PC-9 (cell line): ENCODE measurements at regions of chr6 and their contacts with region 1.

Region 1: GRCh38 chr6:112010328-112010727 is 43.6 kb upstream of the CCN6 start:
- DNase-seq: no peak
- H3K4me3 ChIP-seq: no peak overlapping the region
- H3K27ac ChIP-seq: no peak overlapping the region
- H3K4me1 ChIP-seq: 0 out of 2 replicates have a peak, but pooled peaks cover 4% of the 10 kb centered on the region
- H3K27me3 ChIP-seq: no peaks in the 10 kb centered on the region
- CTCF ChIP-seq: no peak; the same call in 1 of the 2 replicates

Region 2: DNA sequence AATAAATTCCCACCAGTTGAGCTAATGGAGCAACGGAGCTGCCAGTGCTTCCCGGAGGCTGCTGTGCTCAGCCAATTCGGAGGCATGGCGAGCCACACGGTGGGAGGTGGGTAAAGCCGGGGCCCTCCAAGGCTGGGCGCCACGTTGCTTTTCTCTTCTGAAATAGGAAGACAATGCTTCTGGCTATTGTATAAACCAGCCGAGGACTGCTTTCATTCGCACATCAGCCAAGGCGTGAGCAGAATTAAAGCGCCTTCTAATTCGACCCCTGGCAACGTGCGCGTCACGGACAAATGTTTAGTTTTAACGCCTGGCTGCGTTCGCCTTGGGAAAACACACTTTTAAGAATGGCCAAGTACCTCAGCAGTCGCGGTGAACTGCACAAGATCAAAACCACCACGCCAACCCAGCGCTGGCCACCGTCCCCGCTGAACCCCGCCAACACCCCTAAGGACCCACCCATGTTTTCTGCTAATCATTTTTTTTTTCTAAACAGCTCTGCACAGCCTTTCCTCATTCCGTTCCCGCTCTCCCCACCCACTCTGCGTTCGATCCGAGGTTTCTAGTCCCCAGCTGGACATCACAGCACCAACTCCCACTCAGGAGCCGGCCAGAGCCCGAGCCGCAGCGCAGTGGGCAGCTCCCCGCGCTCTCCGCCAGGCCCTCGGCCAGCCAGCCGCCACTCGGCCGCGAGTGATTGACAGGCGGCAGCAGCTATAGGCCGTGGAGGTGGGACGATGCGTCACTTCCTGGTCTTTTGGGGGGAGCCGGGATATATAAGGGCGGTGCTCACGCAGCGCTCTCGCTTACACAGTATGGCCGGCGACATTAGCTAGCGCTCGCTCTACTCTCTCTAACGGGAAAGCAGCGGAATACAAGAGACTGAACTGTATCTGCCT is 1136.1 kb before region 1 on chr6 and contains the start of gene AMD1:
- CTCF ChIA-PET with region 1: no interaction called
- POLR2A ChIA-PET with region 1: interaction called, 27 read pairs
- intact Hi-C with region 1: no loop called
- DNase-seq: peak; percentile 93 to 95
- H3K4me3 ChIP-seq: peak within 1 kb of the TSS; percentile 90
- H3K27ac ChIP-seq: peak within 1 kb of the TSS; percentile 73
- H3K4me1 ChIP-seq: peaks cover 36% of the 10 kb centered on the region
- H3K27me3 ChIP-seq: no peaks in the 10 kb centered on the region
- CTCF ChIP-seq: no peak
- total RNA-seq, gene AMD1: 40.1 and 46.4 TPM in 2 replicates

Region 3: GRCh38 chr6:111406200-111406721 is 604.1 kb before region 1 on chr6:
- CTCF ChIA-PET with region 1: no interaction called
- POLR2A ChIA-PET with region 1: no interaction called
- intact Hi-C with region 1: no loop called
- DNase-seq: no peak
- H3K4me3 ChIP-seq: no peak overlapping the region
- H3K27ac ChIP-seq: no peak overlapping the region
- H3K4me1 ChIP-seq: no peaks in the 10 kb centered on the region
- H3K27me3 ChIP-seq: no peaks in the 10 kb centered on the region
- CTCF ChIP-seq: no peak

Region 4: DNA sequence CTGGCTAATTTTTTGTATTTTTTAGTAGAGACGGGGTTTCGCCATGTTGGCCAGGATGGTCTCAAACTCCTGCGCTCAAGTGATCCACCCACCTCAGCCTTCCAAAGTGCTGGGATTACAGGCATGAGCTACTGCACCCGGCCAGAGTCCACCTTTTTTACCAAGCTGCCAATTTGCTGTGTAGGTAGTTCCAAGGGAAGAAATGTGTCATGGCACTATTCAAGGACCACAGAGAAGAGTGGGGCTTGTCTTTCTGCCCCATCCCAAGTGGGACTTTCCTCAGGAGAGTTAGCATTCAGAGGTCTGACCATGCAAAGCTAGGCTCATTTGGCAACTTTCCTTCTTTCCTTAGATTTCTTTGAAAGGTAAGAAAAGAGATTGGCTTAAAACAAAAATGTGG is 292.7 kb before region 1 on chr6:
- CTCF ChIA-PET with region 1: no interaction called
- POLR2A ChIA-PET with region 1: interaction called, 10 read pairs
- intact Hi-C with region 1: no loop called
- DNase-seq: no peak
- H3K4me3 ChIP-seq: no peak overlapping the region
- H3K27ac ChIP-seq: no peak overlapping the region
- H3K4me1 ChIP-seq: peaks cover 8% of the 10 kb centered on the region
- H3K27me3 ChIP-seq: no peaks in the 10 kb centered on the region
- CTCF ChIP-seq: no peak

Region 5: GRCh38 chr6:112279031-112279935 is 269.0 kb after region 1 on chr6:
- CTCF ChIA-PET with region 1: no interaction called
- POLR2A ChIA-PET with region 1: no interaction called
- intact Hi-C with region 1: no loop called
- DNase-seq: no peak
- H3K4me3 ChIP-seq: no peak overlapping the region
- H3K27ac ChIP-seq: no peak overlapping the region
- H3K4me1 ChIP-seq: peaks cover 33% of the 10 kb centered on the region
- H3K27me3 ChIP-seq: no peaks in the 10 kb centered on the region
- CTCF ChIP-seq: no peak